ENCODE measurements at regions of chr1 and their contacts with region 1.

Region 1: GRCh38 chr1:169466259-169467230 is 19.2 kb downstream of the SLC19A2 start:
- DNase-seq: peak in 1 of 2 donors; percentile 55
- H3K4me3 ChIP-seq: no peak overlapping the region
- H3K27ac ChIP-seq: no peak overlapping the region
- H3K4me1 ChIP-seq: no peaks in the 10 kb centered on the region
- H3K27me3 ChIP-seq: no peaks in the 10 kb centered on the region
- CTCF ChIP-seq: peak in 3 of 7 experiments; percentile 13 to 35 (median 33)
- EP300 ChIP-seq: no peak
- POLR2A ChIP-seq: no peak

Region 2: DNA sequence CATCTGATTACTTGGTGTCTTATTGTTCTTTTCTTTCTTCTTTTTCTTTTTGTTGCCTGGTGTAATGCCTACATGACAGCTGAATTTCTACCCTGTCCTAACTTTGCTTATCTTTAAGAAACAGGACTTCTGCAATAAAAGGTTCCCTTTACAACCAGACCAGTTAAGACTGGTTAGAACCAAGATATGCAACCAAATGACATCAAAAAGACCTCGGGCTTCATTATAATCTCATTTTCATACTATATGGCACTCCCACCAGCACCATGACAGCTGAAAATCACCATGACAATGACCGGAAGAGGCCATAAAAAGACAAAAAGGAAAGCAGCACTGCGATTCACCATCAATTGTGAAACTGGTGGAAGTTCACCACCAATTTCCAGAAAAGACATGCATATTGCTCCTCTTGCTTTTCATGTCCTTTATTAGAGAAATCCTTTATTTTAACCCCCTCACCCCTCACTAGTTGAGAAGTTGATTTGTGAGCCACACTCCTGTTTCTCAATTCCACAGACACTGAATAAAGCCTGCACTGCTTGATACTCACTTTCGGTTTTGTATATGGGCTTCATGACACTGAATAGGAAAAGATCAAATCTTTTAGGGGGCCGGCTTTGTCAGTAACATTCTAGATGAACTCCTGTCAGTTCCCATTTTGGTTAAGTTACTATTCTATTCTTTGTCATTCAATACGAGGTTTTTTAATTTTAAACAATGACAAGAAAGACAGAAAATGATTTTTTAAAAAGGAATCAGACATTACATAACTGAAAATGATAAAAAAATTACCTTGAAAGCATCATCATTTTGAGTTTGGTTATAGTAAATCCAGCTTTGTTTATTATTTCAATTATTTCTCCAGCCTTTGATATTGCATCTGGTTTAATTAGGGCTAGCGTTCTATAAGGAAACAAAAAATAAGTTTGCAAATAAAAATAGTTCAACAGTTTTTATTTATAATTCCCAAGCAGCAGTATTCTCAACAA is 157.1 kb before region 1 on chr1:
- intact Hi-C with region 1: no loop called
- DNase-seq: no peak
- H3K4me3 ChIP-seq: no peak overlapping the region
- H3K27ac ChIP-seq: no peak overlapping the region
- H3K4me1 ChIP-seq: no peaks in the 10 kb centered on the region
- H3K27me3 ChIP-seq: no peaks in the 10 kb centered on the region
- CTCF ChIP-seq: no peak
- EP300 ChIP-seq: no peak
- POLR2A ChIP-seq: no peak

Region 3: DNA sequence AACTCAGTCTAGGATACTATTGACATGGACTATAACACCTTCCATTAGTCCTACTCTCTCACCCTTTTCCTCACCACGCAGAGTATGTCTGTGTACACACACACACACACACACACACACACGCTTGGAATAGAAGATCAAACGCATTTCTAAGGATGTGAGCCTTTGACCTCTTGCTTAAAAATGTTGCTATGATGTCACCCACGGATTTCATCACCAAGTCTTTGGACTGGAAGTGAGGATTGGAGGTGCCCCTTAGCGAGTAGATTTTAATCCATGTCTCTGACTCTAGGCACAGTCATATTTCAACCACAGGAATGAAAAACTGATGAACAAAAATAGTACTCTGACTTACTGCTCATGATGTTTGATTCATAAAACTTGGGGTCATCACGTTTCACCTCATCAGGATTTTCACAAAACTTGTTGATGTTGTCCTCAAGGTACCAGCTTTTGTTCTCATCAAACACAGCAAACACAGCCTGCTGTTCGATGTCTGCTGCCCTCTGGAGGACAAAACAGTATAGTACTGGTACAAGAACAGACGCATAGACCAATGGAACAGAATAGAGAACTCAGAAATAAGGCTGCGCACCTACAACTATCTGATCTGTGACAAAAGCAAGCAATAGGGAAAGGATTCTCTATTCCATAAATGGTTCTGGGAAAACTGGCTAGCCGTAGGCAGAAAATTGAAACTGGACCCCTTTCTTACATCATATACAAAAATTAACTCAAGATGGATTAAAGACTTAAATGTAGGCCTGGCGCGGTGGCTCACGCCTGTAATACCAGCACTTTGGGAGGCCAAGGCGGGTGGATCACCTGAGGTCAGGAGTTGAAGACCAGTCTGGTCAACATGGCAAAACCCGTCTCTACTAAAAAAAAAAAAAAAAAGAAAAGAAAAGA is 79.8 kb after region 1 on chr1:
- intact Hi-C with region 1: loop called (anchors 5 kb)
- DNase-seq: peak; percentile 55 to 92
- H3K4me3 ChIP-seq: no peak overlapping the region
- H3K27ac ChIP-seq: no peak overlapping the region
- H3K4me1 ChIP-seq: no peaks in the 10 kb centered on the region
- H3K27me3 ChIP-seq: no peaks in the 10 kb centered on the region
- CTCF ChIP-seq: peak in 5 of 7 experiments; percentile 69 to 85 (median 78)
- EP300 ChIP-seq: no peak
- POLR2A ChIP-seq: no peak

Measured in stomach (tissue), 19 donors.